H1 (cell line): ENCODE measurements at regions of chr22 and their contacts with region 1.

Region 1: GRCh38 chr22:24156913-24157821 is 24.1 kb upstream of the SUSD2 start:
- DNase-seq: peak; percentile 80 to 93
- H3K4me3 ChIP-seq: peak overlapping the region; percentile 23 to 62 (median 52); a peak in 7 of 8 replicates
- H3K27ac ChIP-seq: peak overlapping the region; percentile 7; the same call in 1 of the 2 replicates
- H3K4me1 ChIP-seq: peaks cover 0 to 22% (median 12%) of the 10 kb centered on the region in 4 experiments; a peak in 6 of 7 replicates
- H3K27me3 ChIP-seq: peaks cover 0 to 6% (median 1%) of the 10 kb centered on the region in 4 experiments; a peak in 3 of 7 replicates
- CTCF ChIP-seq: peak; percentile 87 to 97 (median 92)
- EP300 ChIP-seq: no peak
- POLR2A ChIP-seq: no peak
- RAD21 ChIP-seq: peak in 1 of 2 experiments; percentile 37; a peak in 2 of 4 replicates

Region 2: GRCh38 chr22:24095826-24096757 is 61.1 kb before region 1 on chr22:
- CTCF ChIA-PET with region 1: interaction called, 15 read pairs
- POLR2A ChIA-PET with region 1: no interaction called
- DNase-seq: no peak
- H3K4me3 ChIP-seq: no peak overlapping the region
- H3K27ac ChIP-seq: no peak overlapping the region
- H3K4me1 ChIP-seq: no peaks in the 10 kb centered on the region
- H3K27me3 ChIP-seq: no peaks in the 10 kb centered on the region
- CTCF ChIP-seq: no peak
- EP300 ChIP-seq: no peak
- POLR2A ChIP-seq: no peak
- RAD21 ChIP-seq: no peak

Region 3: GRCh38 chr22:24117942-24118341 is 39.2 kb before region 1 on chr22:
- CTCF ChIA-PET with region 1: interaction called, 40 read pairs
- POLR2A ChIA-PET with region 1: no interaction called
- DNase-seq: peak in 1 of 2 experiments; percentile 59
- H3K4me3 ChIP-seq: no peak overlapping the region
- H3K27ac ChIP-seq: no peak overlapping the region
- H3K4me1 ChIP-seq: peaks cover 3% of the 10 kb centered on the region in 4 experiments; a peak in 4 of 7 replicates
- H3K27me3 ChIP-seq: no peaks in the 10 kb centered on the region
- CTCF ChIP-seq: peak in 2 of 3 experiments; percentile 18 to 39; a peak in 2 of 4 replicates
- EP300 ChIP-seq: no peak
- POLR2A ChIP-seq: no peak
- RAD21 ChIP-seq: no peak

Region 4: GRCh38 chr22:24133187-24133965 is 23.8 kb before region 1 on chr22:
- CTCF ChIA-PET with region 1: interaction called, 102 read pairs
- POLR2A ChIA-PET with region 1: interaction called, 3 read pairs
- DNase-seq: no peak
- H3K4me3 ChIP-seq: no peak overlapping the region
- H3K27ac ChIP-seq: no peak overlapping the region
- H3K4me1 ChIP-seq: no peaks in the 10 kb centered on the region; a peak in 1 of 7 replicates
- H3K27me3 ChIP-seq: no peaks in the 10 kb centered on the region
- CTCF ChIP-seq: peak; percentile 59 to 79 (median 62)
- EP300 ChIP-seq: no peak
- POLR2A ChIP-seq: no peak
- RAD21 ChIP-seq: peak; percentile 64 to 76

Region 5: DNA sequence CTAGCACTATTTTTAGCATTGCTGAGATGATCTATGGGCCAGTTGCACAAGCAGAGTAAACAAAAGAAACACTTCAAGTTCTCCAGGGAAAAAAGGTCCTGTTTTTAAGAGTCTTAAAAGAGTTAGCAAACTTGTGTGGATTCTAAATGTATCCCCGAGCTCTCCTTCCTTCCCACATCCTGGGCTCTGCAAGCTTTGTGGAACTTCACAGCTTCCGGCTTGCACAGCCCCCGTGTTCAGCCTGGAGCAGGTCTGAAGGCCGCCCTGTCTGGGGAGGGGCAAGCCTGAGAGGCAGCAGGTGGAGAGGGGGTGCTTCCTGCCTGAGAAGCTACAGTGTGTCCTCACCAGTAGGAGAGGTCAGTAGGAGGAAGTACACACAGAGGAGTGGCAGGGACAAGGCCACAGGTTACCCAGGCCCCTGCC is 11.0 kb before region 1 on chr22:
- CTCF ChIA-PET with region 1: interaction called, 67 read pairs
- POLR2A ChIA-PET with region 1: interaction called, 12 read pairs
- DNase-seq: peak in 1 of 2 experiments; percentile 65
- H3K4me3 ChIP-seq: no peak overlapping the region
- H3K27ac ChIP-seq: no peak overlapping the region
- H3K4me1 ChIP-seq: peaks cover 5 to 19% (median 11%) of the 10 kb centered on the region in 4 experiments
- H3K27me3 ChIP-seq: no peaks in the 10 kb centered on the region
- CTCF ChIP-seq: no peak
- EP300 ChIP-seq: no peak
- POLR2A ChIP-seq: no peak
- RAD21 ChIP-seq: no peak

Region 6: GRCh38 chr22:24189249-24190158 is 32.3 kb after region 1 on chr22:
- CTCF ChIA-PET with region 1: interaction called, 14 read pairs
- POLR2A ChIA-PET with region 1: no interaction called
- DNase-seq: peak; percentile 46 to 91
- H3K4me3 ChIP-seq: no peak overlapping the region
- H3K27ac ChIP-seq: no peak overlapping the region
- H3K4me1 ChIP-seq: peaks cover 0 to 7% (median 0%) of the 10 kb centered on the region in 4 experiments; a peak in 4 of 7 replicates
- H3K27me3 ChIP-seq: no peaks in the 10 kb centered on the region
- CTCF ChIP-seq: peak; percentile 96 to 98 (median 98)
- EP300 ChIP-seq: no peak
- POLR2A ChIP-seq: no peak
- RAD21 ChIP-seq: peak; percentile 99